Colonic mucosa (tissue), 4 donors: ENCODE measurements at regions of chr12 and their contacts with region 1.

Region 1: GRCh38 chr12:88753066-88753465 is 172.8 kb upstream of the KITLG start:
- DNase-seq: no peak
- H3K4me3 ChIP-seq: no peak overlapping the region
- H3K27ac ChIP-seq: peak overlapping the region; percentile 59
- H3K4me1 ChIP-seq: no peaks in the 10 kb centered on the region
- H3K27me3 ChIP-seq: no peaks in the 10 kb centered on the region
- CTCF ChIP-seq: no peak

Region 2: DNA sequence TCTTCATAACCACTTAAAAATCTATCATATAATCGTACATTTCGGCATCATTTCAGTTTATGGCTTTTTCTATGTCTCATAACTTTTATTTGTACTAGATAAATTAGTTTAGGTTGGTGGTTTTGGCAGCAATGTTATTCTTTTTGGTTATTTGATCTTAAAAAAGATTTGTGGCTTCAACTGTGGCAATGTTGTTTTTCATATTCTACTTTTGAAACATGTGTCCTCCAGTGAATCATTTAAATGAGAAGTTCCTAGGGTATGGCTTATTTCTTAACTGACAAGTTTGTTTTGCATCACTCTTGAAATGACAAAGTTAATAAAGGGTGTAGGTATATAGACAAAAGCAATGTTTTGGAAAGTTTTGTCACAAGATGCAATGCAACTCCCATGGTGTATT is 161.7 kb before region 1 on chr12:
- intact Hi-C with region 1: loop called (anchors 10 kb)
- DNase-seq: no peak
- H3K4me3 ChIP-seq: no peak overlapping the region
- H3K27ac ChIP-seq: no peak overlapping the region
- H3K4me1 ChIP-seq: peaks cover 3% of the 10 kb centered on the region
- H3K27me3 ChIP-seq: no peaks in the 10 kb centered on the region
- CTCF ChIP-seq: no peak

Region 3: DNA sequence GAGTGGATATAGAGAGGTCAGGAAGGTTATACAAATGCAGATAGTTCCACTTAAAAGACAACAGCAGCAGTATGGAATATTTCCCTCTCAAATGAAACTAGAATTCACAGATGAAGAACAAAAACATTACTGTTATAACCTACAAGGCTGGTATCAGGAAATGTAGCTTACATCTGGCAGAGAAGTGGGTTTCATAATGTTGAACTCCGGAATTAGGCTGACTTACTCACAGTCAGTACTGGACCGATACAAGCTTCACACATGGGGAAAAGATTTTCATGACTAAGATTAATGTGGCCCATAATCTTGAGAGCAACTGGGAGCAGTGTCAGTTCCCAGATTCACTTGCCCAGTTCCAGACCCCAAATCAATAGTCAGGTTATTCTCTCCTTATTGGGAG is 245.4 kb after region 1 on chr12:
- intact Hi-C with region 1: no loop called
- DNase-seq: no peak
- H3K4me3 ChIP-seq: no peak overlapping the region
- H3K27ac ChIP-seq: no peak overlapping the region
- H3K4me1 ChIP-seq: no peaks in the 10 kb centered on the region
- H3K27me3 ChIP-seq: no peaks in the 10 kb centered on the region
- CTCF ChIP-seq: no peak